PC-9 (cell line): ENCODE measurements at regions of chr6 and their contacts with region 1.

Region 1: DNA sequence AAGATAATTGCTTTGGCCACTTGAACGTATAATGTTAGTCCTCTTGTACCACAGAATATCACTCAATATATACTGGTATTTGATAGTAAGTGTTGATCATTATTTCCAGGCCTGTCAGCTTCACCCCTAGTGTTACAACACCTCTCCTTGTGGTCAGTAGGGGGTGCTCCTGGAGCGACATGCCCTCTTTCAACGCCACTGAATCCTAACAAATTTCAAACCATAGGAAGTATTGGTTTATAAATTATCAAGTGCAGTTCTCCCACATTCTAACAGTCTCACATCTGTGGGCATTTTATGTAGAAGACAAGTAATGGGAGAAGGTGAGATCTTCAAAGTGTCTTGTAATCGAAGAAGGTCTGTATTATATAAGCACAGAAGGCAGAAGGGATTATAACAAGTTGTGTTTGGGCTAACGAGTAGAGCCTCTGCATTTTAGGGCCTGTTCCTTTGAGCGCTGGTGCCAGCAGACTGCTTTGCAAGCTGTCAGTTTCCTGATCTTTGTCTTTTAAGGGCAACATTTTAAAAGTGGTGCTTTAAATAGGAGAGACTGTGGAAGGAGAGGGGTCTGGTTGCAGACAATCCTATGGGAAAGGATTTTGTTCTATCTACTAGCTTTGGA is 57.1 kb upstream of the CEP162 start:
- DNase-seq: peak in 1 of 2 experiments; percentile 2
- H3K4me3 ChIP-seq: no peak overlapping the region
- H3K27ac ChIP-seq: no peak overlapping the region
- H3K4me1 ChIP-seq: no peaks in the 10 kb centered on the region
- H3K27me3 ChIP-seq: no peaks in the 10 kb centered on the region
- CTCF ChIP-seq: peak; percentile 55

Region 2: DNA sequence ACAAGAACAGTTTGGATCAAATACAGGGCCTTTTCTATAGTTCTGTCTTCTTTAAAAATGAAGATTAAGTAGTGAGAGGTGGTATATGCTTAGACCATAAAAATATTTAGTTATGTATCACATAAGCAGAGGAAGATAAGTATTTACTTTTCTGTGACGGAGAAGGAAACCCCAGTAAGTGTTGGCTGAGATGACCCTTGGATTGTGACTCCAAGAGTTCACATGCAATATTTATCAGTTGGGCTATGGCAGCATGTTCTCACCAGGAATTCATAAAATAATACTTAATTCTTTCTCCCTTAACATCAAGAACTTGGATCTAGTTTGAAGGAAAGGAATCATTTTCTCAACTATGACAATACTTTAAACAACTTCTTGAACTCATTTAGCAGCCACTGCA is 578.3 kb after region 1 on chr6:
- CTCF ChIA-PET with region 1: interaction called, 13 read pairs
- POLR2A ChIA-PET with region 1: no interaction called
- intact Hi-C with region 1: no loop called
- DNase-seq: no peak
- H3K4me3 ChIP-seq: no peak overlapping the region
- H3K27ac ChIP-seq: no peak overlapping the region
- H3K4me1 ChIP-seq: no peaks in the 10 kb centered on the region
- H3K27me3 ChIP-seq: no peaks in the 10 kb centered on the region
- CTCF ChIP-seq: no peak

Region 3: DNA sequence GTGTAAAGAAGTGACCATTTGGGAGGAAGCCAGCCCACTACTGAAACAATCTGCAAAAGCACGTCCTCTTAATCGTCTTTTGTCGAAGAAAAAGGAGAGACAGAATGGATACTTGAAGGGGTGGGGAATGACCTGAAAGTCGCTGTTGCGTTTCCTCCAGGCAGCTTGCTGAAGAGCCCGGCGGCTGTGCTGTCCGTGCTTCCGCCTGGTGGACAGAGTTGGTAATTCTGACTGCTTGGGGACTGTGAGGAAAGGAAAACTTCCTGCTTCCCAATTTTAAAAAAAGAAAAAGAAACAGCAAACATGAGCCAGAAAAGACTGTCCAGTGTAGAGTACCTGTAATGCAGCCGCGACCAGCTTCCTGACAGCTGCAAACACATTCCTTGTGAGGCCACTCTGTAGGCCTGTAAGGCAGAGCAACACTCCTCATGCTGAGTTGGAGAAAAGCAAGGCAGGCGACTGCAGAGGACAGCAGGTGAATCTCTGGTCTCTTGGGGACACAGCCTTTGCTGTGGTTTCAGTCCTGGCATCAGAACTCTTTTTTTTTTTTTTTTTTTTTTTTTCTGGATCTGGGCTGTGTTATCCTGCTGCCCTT is 731.0 kb after region 1 on chr6:
- CTCF ChIA-PET with region 1: no interaction called
- POLR2A ChIA-PET with region 1: no interaction called
- intact Hi-C with region 1: loop called (anchors 5 kb)
- DNase-seq: peak in 1 of 2 experiments; percentile 56
- H3K4me3 ChIP-seq: no peak overlapping the region
- H3K27ac ChIP-seq: no peak overlapping the region
- H3K4me1 ChIP-seq: no peaks in the 10 kb centered on the region
- H3K27me3 ChIP-seq: no peaks in the 10 kb centered on the region
- CTCF ChIP-seq: peak; percentile 74